ENCODE measurements at regions of chr16 and their contacts with region 1.

Region 1: GRCh38 chr16:87853411-87854052 is 15.8 kb downstream of the SLC7A5 start:
- DNase-seq: peak; percentile 94
- H3K4me3 Mint-ChIP-seq: peak overlapping the region; percentile 61
- H3K27ac Mint-ChIP-seq: peak overlapping the region; percentile 94
- H3K4me1 Mint-ChIP-seq: peaks cover 69% of the 10 kb centered on the region
- H3K27me3 Mint-ChIP-seq: no peaks in the 10 kb centered on the region

Region 2: GRCh38 chr16:87765776-87766484 is 87.6 kb before region 1 on chr16 and contains the start of gene KLHDC4:
- CTCF ChIA-PET with region 1: interaction called, 13 read pairs
- POLR2A ChIA-PET with region 1: no interaction called
- DNase-seq: peak; percentile 92
- H3K4me3 Mint-ChIP-seq: peak within 1 kb of the TSS; percentile 96
- H3K27ac Mint-ChIP-seq: peak within 1 kb of the TSS; percentile 98
- H3K4me1 Mint-ChIP-seq: peaks cover 46% of the 10 kb centered on the region
- H3K27me3 Mint-ChIP-seq: no peaks in the 10 kb centered on the region
- total RNA-seq, gene KLHDC4: 83.2 to 102 TPM

Region 3: GRCh38 chr16:87822108-87822970 is 31.2 kb before region 1 on chr16:
- CTCF ChIA-PET with region 1: interaction called, 11 read pairs
- POLR2A ChIA-PET with region 1: no interaction called
- DNase-seq: no peak
- H3K4me3 Mint-ChIP-seq: no peak overlapping the region
- H3K27ac Mint-ChIP-seq: peak overlapping the region; percentile 17
- H3K4me1 Mint-ChIP-seq: peaks cover 15% of the 10 kb centered on the region
- H3K27me3 Mint-ChIP-seq: no peaks in the 10 kb centered on the region

Region 4: DNA sequence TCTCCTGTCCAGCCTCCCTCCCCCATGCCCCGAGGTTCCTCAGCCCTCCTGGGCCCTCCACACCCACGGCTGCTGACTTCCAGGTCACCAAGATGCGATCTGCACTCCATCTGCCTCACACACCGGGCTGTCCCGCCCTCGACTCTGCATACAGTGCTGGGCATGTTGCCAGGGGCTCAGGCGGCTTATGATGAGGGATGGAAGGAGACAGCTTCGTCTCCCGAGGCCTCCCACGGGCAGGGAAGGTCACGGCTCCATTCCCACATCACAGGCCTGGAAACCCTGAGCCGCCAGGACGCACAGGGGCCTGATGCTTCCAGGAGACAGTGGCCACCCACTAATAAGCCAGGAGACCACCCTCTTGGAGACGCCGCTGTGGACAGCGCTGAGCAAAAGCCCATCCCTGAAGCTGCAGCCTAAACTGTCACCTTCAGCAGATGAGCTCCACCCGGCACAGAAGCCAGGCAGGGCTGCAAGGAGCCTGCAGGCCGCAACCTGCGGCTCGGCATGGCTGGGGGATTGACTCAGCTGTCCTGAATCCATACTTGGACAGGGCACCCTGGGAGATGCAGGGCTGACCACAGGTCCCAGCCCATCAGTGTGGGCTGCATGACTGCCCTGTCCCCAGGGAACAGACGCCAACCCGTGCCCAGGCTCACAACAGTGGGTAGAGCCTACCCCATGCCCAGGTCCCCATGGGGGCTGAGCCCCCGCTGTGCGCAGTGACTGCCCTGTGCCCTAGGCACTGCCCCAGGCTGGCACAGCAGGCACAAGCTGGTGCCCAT is 18.7 kb before region 1 on chr16:
- CTCF ChIA-PET with region 1: interaction called, 20 read pairs
- POLR2A ChIA-PET with region 1: no interaction called
- DNase-seq: no peak
- H3K4me3 Mint-ChIP-seq: no peak overlapping the region
- H3K27ac Mint-ChIP-seq: no peak overlapping the region
- H3K4me1 Mint-ChIP-seq: peaks cover 3% of the 10 kb centered on the region
- H3K27me3 Mint-ChIP-seq: no peaks in the 10 kb centered on the region

Region 5: DNA sequence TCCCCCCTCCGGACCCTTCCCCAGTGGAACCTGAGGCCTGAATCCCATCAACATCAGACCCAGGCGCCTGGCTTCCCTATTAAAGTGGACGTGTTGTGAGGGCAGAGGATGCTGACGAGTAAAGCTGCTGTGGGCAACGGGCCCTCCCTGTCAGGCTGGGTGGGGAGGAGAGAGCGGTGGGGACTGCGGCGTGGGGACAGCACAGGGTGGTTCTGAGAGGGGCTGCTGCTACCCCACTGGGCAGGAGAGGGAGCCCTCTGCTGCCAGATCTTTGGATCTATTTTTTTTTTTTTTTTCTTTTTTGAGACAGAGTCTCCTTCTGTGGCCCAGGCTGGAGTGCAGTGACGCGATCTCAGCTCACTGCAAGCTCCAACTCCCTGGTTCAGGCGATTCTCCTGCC is 76.9 kb after region 1 on chr16:
- CTCF ChIA-PET with region 1: no interaction called
- POLR2A ChIA-PET with region 1: no interaction called
- DNase-seq: no peak
- H3K4me3 Mint-ChIP-seq: no peak overlapping the region
- H3K27ac Mint-ChIP-seq: no peak overlapping the region
- H3K4me1 Mint-ChIP-seq: peaks cover 5% of the 10 kb centered on the region
- H3K27me3 Mint-ChIP-seq: peaks cover 9% of the 10 kb centered on the region

Measured in activated CD4-positive, alpha-beta T cell treated with anti-CD3 and anti-CD28 coated beads, Interleukin-2, amount 10 ng/mL, durations not matched to agents 7 days and 5 days (primary cell).